Mucosa of descending colon (tissue), 3 donors: ENCODE measurements at regions of chr16 and their contacts with region 1.

Region 1: GRCh38 chr16:8885674-8886592 is 3.8 kb downstream of the LITAFD start:
- DNase-seq: peak in 2 of 3 donors; percentile 54 to 56
- ATAC-seq: peak; percentile 57
- H3K4me3 ChIP-seq: no peak overlapping the region
- H3K4me1 ChIP-seq: peaks cover 21% of the 10 kb centered on the region
- CTCF ChIP-seq: no peak

Region 2: GRCh38 chr16:8567750-8568617 is 317.9 kb before region 1 on chr16:
- intact Hi-C with region 1: loop called (anchors 5 kb)
- DNase-seq: peak in 2 of 3 donors; percentile 75 to 78
- ATAC-seq: peak; percentile 97
- H3K4me3 ChIP-seq: no peak overlapping the region
- H3K4me1 ChIP-seq: peaks cover 3% of the 10 kb centered on the region
- CTCF ChIP-seq: peak; percentile 85

Region 3: GRCh38 chr16:8655184-8655717 is 230.7 kb before region 1 on chr16:
- intact Hi-C with region 1: loop called in 1 of 2 experiments (anchors 10 kb)
- DNase-seq: peak in 1 of 3 donors; percentile 58
- ATAC-seq: peak; percentile 85
- H3K4me3 ChIP-seq: no peak overlapping the region
- H3K4me1 ChIP-seq: no peaks in the 10 kb centered on the region
- CTCF ChIP-seq: no peak

Region 4: DNA sequence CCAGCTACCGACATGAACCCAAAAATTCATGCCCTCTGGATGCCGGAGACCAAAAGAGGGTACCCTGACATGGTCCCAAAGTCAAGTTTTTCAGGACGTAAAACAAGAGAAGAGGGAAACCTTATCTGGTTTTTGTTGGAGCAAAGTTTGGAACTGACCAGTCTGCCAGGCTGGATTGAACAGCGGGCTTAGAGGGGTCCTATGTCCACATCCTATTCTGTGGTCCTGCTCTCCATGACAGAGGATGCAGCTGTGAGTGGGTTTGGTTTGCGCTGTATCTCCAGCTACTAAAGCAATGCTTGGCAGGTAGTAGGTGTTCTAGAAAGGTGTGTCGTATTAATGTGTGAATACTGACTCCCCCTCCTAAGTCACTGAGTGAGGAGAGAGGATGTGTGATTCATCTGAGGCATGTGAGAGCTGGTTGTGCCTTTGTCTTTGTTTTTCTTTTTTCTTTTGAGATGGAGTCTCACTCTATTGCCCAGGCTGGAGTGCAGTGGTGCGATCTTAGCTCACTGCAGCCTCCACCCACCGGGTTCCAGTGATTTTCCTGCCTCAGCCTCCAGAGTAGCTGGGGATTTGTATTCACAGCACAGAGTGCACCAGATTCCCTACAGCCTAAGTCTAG is 57.3 kb before region 1 on chr16:
- intact Hi-C with region 1: loop called in 1 of 2 experiments (anchors 10 kb)
- DNase-seq: no peak
- ATAC-seq: no peak
- H3K4me3 ChIP-seq: no peak overlapping the region
- H3K4me1 ChIP-seq: no peaks in the 10 kb centered on the region
- CTCF ChIP-seq: no peak

Region 5: GRCh38 chr16:8943966-8944759 is 58.2 kb after region 1 on chr16:
- intact Hi-C with region 1: loop called in 1 of 2 experiments (anchors 5 kb)
- DNase-seq: no peak
- ATAC-seq: no peak
- H3K4me3 ChIP-seq: no peak overlapping the region
- H3K4me1 ChIP-seq: peaks cover 76% of the 10 kb centered on the region
- CTCF ChIP-seq: no peak

Region 6: DNA sequence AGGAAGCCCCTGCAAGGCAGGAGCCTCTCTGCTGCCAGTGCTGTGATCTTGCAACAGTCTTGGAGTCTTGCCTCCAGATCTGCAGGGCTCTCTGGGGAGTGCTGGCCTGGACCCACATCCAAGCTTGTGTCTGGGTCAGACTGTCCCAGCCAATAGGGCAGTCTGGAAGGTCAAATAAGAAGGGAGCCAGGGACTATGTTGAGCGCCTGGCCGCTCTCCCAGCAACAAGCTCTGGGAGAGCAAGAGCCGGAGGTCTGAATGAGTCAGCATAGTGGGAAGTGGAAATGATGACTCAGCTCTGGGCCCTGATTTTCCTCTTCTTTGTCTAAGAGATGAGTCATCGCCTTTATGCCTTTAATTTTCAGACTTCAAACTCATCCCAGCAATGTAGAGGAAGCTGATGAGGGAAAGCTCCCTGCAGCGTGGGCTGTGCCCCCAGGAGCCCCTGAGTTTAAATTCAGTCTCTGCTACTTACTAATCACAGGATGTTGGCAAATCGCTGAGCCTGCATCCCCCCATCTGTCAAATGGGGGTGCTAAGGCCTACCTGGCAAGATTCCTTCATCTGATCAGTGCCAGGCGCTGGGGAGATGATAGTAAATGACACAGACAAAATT is 161.9 kb after region 1 on chr16:
- intact Hi-C with region 1: no loop called
- DNase-seq: peak; percentile 64 to 84 (median 79)
- ATAC-seq: peak; percentile 98
- H3K4me3 ChIP-seq: no peak overlapping the region
- H3K4me1 ChIP-seq: no peaks in the 10 kb centered on the region
- CTCF ChIP-seq: no peak